H1 (cell line): ENCODE measurements at regions of chr12 and their contacts with region 1.

Region 1: DNA sequence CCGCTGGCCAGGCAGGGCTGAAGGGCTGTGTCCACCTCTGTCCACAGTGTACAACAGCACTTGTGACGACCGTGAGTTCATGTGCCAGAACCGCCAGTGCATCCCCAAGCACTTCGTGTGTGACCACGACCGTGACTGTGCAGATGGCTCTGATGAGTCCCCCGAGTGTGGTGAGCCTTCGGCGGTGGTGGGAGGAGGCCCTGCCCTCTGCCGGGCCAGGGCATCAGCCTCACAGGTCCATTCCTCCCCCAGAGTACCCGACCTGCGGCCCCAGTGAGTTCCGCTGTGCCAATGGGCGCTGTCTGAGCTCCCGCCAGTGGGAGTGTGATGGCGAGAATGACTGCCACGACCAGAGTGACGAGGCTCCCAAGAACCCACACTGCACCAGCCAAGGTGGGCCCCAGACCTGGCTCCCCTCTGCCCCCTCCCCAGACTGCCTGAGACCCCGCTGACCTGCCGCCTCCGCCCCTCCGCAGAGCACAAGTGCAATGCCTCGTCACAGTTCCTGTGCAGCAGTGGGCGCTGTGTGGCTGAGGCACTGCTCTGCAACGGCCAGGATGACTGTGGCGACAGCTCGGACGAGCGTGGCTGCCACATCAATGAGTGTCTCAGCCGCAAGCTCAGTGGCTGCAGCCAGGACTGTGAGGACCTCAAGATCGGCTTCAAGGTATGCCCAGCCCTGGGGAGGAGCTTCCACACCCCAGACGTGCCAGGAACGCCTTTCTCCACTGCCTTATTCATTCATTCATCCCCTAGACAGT is 20.8 kb upstream of the NXPH4 start:
- DNase-seq: no peak
- H3K4me3 ChIP-seq: no peak overlapping the region
- H3K27ac ChIP-seq: no peak overlapping the region
- H3K4me1 ChIP-seq: no peaks in the 10 kb centered on the region; a peak in 1 of 7 replicates
- H3K27me3 ChIP-seq: no peaks in the 10 kb centered on the region
- CTCF ChIP-seq: no peak
- EP300 ChIP-seq: no peak
- POLR2A ChIP-seq: no peak
- RAD21 ChIP-seq: no peak

Region 2: DNA sequence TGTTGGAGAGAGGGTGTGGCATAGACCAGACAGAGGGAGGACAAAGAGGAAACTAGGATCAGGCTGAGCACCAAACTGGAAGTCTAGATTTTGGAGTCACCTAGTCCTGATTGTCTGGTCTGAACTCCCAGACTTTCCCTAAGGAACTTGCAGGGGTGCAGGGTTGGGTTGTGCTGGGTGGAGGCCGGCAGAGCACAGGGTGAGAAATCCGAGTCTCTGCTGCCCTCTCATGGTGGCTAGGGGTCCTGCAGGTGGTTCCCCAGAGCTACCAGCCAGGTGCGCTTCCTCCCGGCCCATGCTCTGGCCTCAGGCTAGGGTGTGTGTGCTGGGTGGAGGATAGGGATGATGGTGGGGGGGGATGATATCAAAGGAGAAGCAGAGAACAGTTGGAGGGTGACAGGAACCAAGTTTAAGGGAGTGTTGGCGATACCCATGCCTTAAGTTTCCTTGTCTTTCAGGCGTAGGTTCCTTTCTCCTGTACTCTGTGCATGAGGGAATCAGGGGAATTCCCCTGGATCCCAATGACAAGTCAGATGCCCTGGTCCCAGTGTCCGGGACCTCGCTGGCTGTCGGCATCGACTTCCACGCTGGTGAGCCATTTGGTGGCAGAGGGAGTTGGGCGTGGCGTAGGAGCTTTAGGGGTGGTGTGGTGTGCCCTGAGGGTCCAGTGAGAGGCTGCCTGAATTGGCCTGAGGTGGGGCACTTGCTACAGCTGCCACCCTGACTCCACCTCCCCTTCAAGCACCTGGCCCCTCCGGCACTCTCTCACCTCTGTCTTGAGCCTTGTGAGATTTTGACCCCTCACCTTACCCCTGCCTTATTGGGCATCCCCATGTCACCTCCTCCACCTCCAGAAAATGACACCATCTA is 12.6 kb before region 1 on chr12:
- CTCF ChIA-PET with region 1: interaction called, 389 read pairs
- POLR2A ChIA-PET with region 1: interaction called, 53 read pairs
- DNase-seq: peak; percentile 54 to 97
- H3K4me3 ChIP-seq: no peak overlapping the region
- H3K27ac ChIP-seq: no peak overlapping the region
- H3K4me1 ChIP-seq: no peaks in the 10 kb centered on the region; a peak in 1 of 7 replicates
- H3K27me3 ChIP-seq: no peaks in the 10 kb centered on the region
- CTCF ChIP-seq: peak in 2 of 3 experiments; percentile 82 to 96; a peak in 3 of 4 replicates
- EP300 ChIP-seq: no peak
- POLR2A ChIP-seq: no peak
- RAD21 ChIP-seq: peak; percentile 71 to 76

Region 3: GRCh38 chr12:57223191-57224165 is 27.7 kb after region 1 on chr12:
- CTCF ChIA-PET with region 1: no interaction called
- POLR2A ChIA-PET with region 1: no interaction called
- DNase-seq: no peak
- H3K4me3 ChIP-seq: no peak overlapping the region
- H3K27ac ChIP-seq: no peak overlapping the region
- H3K4me1 ChIP-seq: peaks cover 4 to 51% (median 33%) of the 10 kb centered on the region in 4 experiments
- H3K27me3 ChIP-seq: peaks cover 66 to 92% (median 89%) of the 10 kb centered on the region in 4 experiments
- CTCF ChIP-seq: no peak
- EP300 ChIP-seq: no peak
- POLR2A ChIP-seq: no peak
- RAD21 ChIP-seq: no peak